ENCODE measurements at regions of chr2 and their contacts with region 1.

Region 1: DNA sequence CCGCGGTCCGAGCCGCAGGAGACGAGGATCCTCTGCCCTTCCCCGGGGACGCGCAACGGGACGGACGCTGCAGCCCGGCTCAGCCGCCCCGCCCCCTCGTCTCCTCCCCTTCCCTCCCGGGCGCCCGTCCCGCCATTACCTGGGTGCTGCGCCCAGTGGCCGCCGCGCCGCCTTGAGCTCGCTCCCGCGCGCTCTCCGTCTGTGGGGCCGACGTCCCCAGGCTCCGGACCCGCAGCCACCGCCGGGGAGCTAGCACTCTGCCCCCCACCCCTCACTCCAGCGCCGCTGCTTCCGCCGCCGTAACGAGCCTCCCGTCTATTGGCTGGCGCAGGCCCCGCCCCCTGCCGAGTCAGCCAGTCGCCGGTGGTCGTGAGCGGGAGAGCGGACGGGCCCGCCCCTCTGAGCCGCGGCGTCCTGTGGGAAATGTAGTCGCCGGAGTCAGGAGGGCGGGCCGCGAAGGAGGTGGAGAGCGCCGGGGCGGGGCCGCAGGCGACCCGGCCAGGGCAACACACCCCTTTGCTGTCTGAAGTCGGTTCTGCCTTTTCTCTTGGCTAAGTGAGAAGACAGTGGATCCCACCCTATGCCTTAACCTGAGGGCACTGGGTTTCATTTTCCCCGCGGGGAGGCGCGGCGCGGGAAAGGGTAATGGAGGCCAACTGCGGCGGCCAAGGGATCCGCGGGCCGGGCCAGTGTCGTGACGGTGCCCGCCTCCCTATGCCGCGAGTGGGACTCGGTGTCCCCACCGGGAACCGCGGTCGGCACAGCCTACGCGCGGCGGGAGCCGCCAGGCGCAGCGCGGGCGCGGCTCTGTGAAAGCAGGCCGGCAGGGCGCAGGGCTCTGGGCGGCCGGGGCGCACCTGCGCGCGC is at the start of gene SAP130:
- DNase-seq: peak; percentile 98
- ATAC-seq: peak; percentile 83 to 90
- H3K4me3 ChIP-seq: peak within 1 kb of the TSS; percentile 77 to 98 (median 92)
- H3K27ac ChIP-seq: peak within 1 kb of the TSS; percentile 86 to 99 (median 98)
- H3K4me1 ChIP-seq: peaks cover 12 to 14% of the 10 kb centered on the region in 2 donors
- H3K27me3 ChIP-seq: no peaks in the 10 kb centered on the region
- CTCF ChIP-seq: no peak
- POLR2A ChIP-seq: peak; percentile 83 to 87
- total RNA-seq, gene SAP130: 10.1 to 16.2 (median 11.5) TPM

Region 2: GRCh38 chr2:127701193-127701650 is 326.8 kb before region 1 on chr2 and contains the start of gene SFT2D3:
- in situ Hi-C with region 1: no loop called
- intact Hi-C with region 1: loop called (anchors 5 kb)
- DNase-seq: peak; percentile 90
- ATAC-seq: peak; percentile 82 to 84
- H3K4me3 ChIP-seq: peak within 1 kb of the TSS; percentile 60 to 72 (median 68)
- H3K27ac ChIP-seq: peak within 1 kb of the TSS; percentile 92 to 95 (median 95)
- H3K4me1 ChIP-seq: peaks cover 36% of the 10 kb centered on the region in 2 donors
- H3K27me3 ChIP-seq: no peaks in the 10 kb centered on the region
- CTCF ChIP-seq: no peak
- POLR2A ChIP-seq: peak; percentile 84 to 87
- total RNA-seq, gene SFT2D3: 3.0 to 5.5 (median 3.5) TPM

Region 3: GRCh38 chr2:127857265-127857808 is 170.7 kb before region 1 on chr2:
- in situ Hi-C with region 1: no loop called
- intact Hi-C with region 1: loop called (anchors 2 kb)
- DNase-seq: no peak
- ATAC-seq: peak; percentile 11 to 12
- H3K4me3 ChIP-seq: peak overlapping the region; percentile 75 to 99 (median 90)
- H3K27ac ChIP-seq: peak overlapping the region; percentile 80 to 90 (median 83)
- H3K4me1 ChIP-seq: peaks cover 8 to 27% of the 10 kb centered on the region in 2 donors
- H3K27me3 ChIP-seq: no peaks in the 10 kb centered on the region
- CTCF ChIP-seq: no peak
- POLR2A ChIP-seq: no peak

Region 4: DNA sequence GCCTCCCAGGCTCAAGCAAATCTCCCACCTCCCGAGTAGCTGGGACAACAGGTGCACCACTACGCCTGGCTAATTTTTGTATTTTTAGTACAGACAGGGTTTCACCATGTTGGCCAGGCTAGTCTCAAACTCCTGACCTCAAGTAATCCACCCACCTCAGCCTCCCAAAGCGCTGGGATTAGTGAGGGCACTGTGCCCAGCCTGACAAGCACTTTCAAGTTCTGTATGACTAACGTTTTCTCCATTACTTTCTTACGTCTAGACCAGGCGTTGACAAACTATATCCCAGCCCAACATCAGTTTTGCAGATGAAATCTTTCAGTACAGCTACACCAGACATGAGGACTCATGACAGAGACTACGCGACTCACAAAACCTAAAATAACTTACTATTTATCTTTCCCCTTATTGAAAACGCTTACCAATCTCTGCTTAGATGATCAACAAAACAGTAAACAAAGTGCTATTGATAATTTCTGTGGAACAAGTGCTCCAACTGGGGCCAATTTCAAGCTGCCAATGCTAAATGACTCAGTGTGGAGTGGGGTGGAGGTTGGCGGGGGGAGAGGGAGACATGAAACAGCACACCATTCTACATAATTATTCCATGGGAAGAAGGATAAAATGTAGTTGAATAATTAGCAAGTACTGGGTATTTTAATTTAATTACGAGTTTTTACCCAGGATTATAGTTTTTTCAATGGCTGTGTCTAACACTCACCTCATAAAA is 59.3 kb before region 1 on chr2:
- in situ Hi-C with region 1: no loop called
- intact Hi-C with region 1: loop called (anchors 2 kb)
- DNase-seq: peak; percentile 51 to 90
- ATAC-seq: peak; percentile 96
- H3K4me3 ChIP-seq: no peak overlapping the region
- H3K27ac ChIP-seq: peak overlapping the region; percentile 73 to 91 (median 84)
- H3K4me1 ChIP-seq: peaks cover 8 to 9% of the 10 kb centered on the region in 2 donors
- H3K27me3 ChIP-seq: no peaks in the 10 kb centered on the region
- CTCF ChIP-seq: no peak
- POLR2A ChIP-seq: no peak

Region 5: DNA sequence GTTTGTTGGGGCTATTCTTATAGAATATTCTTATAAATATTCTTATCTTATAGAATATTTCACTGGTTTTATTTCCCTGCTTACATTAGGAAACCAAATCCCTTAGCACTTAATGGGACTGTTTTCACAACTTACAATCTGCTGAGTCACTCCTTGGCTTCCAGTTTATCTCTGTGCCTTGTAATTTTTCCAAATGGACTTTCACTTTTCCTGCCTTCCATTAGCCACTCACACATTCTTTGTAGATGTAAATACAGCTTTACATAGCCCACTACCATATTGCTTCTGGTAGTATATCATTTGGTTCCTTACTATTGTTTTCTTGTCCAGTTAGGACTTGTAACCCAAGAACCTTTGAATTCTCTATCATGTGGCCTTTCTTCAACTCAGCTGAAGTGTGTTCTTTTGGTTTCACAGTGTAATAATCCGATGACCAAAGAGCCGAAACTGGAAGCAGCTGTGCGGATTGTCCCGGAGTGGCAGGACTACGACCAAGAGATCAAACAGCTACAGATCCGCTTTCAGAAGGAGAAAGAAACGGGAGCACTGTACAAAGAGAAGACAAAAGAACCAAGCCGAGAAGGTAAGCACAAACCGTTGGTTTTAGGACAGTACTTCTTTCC is 159.1 kb after region 1 on chr2:
- in situ Hi-C with region 1: no loop called
- intact Hi-C with region 1: loop called (anchors 5 kb)
- DNase-seq: peak; percentile 66 to 75
- ATAC-seq: peak; percentile 98
- H3K4me3 ChIP-seq: peak overlapping the region; percentile 38 to 54 (median 52)
- H3K27ac ChIP-seq: peak overlapping the region; percentile 84 to 92 (median 86)
- H3K4me1 ChIP-seq: peaks cover 7 to 18% of the 10 kb centered on the region in 2 donors
- H3K27me3 ChIP-seq: no peaks in the 10 kb centered on the region
- CTCF ChIP-seq: no peak
- POLR2A ChIP-seq: peak; percentile 19 to 37

Measured in gastrocnemius medialis (tissue), 4 donors.